H1 (cell line): ENCODE measurements at regions of chr1 and their contacts with region 1.

Region 1: DNA sequence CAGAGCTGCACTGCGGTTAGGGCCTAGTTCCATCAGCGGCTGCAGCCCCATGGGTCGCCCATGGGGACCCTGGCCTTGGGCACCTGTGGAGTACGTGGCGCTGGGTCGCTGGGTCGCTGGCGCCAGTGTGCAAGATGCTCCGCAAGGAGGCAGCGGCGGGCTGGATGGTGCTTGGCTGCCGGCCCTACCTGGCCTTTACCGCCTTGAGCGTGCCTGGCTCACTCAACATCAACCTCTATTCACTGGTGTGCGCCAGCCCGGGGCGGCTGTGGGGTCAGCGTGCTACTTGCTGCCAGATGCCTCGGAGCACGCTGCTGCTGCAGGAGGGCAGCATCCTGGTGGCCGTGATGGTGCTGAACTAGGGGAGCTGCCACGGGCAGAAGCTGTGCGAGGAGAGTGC is 85.1 kb upstream of the RHOU start:
- DNase-seq: peak; percentile 44 to 79
- H3K4me3 ChIP-seq: peak overlapping the region in 1 of 4 experiments; percentile 37; a peak in 1 of 8 replicates
- H3K27ac ChIP-seq: no peak overlapping the region
- H3K4me1 ChIP-seq: peaks cover 0 to 7% (median 2%) of the 10 kb centered on the region in 4 experiments; a peak in 3 of 7 replicates
- H3K27me3 ChIP-seq: peaks cover 26 to 53% (median 45%) of the 10 kb centered on the region in 4 experiments
- CTCF ChIP-seq: peak; percentile 61 to 79 (median 68)
- EP300 ChIP-seq: no peak; a peak in 1 of 3 replicates
- POLR2A ChIP-seq: no peak
- RAD21 ChIP-seq: peak; percentile 64 to 69

Region 2: GRCh38 chr1:228664399-228664914 is 14.3 kb after region 1 on chr1:
- CTCF ChIA-PET with region 1: interaction called, 18 read pairs
- POLR2A ChIA-PET with region 1: no interaction called
- DNase-seq: peak; percentile 53 to 91
- H3K4me3 ChIP-seq: no peak overlapping the region
- H3K27ac ChIP-seq: no peak overlapping the region
- H3K4me1 ChIP-seq: peaks cover 0 to 2% (median 0%) of the 10 kb centered on the region in 4 experiments; a peak in 1 of 7 replicates
- H3K27me3 ChIP-seq: no peaks in the 10 kb centered on the region
- CTCF ChIP-seq: peak; percentile 34 to 71 (median 64)
- EP300 ChIP-seq: no peak
- POLR2A ChIP-seq: no peak
- RAD21 ChIP-seq: peak; percentile 90 to 94